Uterus (tissue), 4 donors: ENCODE measurements at regions of chr20 and their contacts with region 1.

Region 1: DNA sequence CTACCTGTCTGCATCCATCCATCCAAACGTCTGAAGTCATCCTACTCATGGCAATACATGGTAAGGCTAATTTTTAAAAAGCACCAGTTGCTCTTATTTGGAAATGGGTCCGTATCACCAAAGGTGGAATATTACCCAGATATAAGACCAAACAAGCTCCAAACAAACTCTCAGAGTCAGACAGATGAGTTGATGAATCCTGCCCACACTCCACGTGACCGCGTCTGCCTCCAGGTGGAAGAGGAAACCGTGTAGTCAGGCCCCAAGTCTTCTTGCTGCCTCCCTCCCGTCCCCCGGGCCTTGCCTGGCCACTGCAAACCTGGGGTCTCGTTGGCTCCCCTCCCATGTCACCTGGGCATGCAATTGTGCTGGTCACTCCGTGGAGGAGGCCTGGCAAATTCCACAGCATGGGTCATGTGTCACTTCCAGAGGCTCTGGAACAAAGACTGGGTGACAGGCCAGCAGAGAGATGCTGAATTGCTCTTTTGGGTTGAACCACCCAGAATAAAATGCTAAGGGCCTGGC is 31.8 kb downstream of the CTCFL start:
- DNase-seq: no peak
- H3K4me3 ChIP-seq: no peak overlapping the region
- H3K27ac ChIP-seq: no peak overlapping the region
- H3K4me1 ChIP-seq: no peaks in the 10 kb centered on the region
- H3K27me3 ChIP-seq: no peaks in the 10 kb centered on the region
- CTCF ChIP-seq: no peak
- POLR2A ChIP-seq: no peak

Region 2: DNA sequence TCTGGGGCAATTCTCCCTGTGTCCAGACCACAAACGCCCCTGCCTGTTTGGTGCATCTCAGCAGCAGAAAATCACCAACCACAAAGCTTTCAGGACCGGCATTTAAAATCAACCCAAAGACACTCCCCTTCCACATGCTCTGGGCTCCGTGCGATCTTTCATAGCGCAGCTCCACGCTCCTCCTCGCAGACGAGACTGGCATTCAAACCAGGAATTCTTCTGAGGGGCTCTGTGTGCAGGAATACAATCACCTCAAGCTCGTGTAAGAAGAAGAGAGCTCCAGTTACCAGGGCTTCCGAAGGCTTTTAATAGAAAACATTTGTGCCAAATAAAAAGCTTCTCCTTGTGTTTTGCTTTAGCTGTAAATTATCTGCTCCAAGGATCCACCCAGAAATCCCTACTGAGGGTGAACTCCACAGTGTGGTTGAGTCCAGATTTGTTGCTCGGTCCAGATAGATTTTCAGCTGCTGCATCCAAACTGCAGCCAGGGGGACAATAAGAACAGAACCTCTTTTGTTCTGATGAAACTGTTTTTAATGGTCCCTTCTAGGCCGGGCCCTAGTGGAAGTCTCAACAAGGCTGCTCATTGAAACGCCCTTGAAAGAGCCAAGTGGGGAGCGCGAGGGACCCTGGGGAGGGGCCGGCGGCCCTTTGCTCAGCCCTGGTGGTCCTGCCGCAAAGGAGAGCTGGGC is 210.3 kb before region 1 on chr20:
- intact Hi-C with region 1: no loop called
- DNase-seq: no peak
- H3K4me3 ChIP-seq: no peak overlapping the region
- H3K27ac ChIP-seq: no peak overlapping the region
- H3K4me1 ChIP-seq: no peaks in the 10 kb centered on the region
- H3K27me3 ChIP-seq: no peaks in the 10 kb centered on the region
- CTCF ChIP-seq: no peak
- POLR2A ChIP-seq: no peak

Region 3: DNA sequence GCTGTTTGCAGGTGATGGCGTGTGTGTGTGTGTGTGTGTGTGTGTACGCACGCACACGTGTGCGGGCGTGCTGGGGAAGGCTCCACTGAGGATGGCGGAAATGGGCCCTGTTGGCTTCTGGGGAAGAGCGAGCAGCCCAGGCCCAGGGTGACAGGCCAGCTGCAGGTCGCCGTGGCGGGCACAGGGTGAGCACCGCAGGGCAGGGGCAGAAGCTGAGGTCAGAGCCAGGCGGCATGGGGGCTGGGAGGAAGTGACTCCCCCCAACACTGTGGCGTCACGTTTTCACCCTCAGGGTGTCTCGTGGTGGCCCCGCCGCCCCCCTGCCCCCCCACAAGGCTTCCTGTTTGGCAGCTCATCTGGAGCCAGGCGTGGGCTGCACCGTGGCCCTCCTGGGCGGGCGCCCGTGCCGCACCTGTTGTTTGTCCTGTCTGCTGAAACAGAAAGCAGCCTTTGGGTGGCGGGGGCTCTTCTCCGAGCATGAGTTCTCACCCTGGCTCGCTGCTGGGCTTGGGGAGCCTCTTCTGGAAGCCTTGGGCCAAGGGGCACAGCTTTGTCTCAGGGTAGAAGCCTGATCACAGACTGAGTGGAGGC is 94.8 kb before region 1 on chr20:
- intact Hi-C with region 1: loop called (anchors 5 kb)
- DNase-seq: peak; percentile 60 to 76
- H3K4me3 ChIP-seq: peak overlapping the region in 1 of 2 donors; percentile 4
- H3K27ac ChIP-seq: peak overlapping the region; percentile 78 to 83
- H3K4me1 ChIP-seq: peaks cover 0 to 37% of the 10 kb centered on the region in 2 donors
- H3K27me3 ChIP-seq: no peaks in the 10 kb centered on the region
- CTCF ChIP-seq: no peak
- POLR2A ChIP-seq: no peak